ENCODE measurements at regions of chr14 and their contacts with region 1.

Region 1: DNA sequence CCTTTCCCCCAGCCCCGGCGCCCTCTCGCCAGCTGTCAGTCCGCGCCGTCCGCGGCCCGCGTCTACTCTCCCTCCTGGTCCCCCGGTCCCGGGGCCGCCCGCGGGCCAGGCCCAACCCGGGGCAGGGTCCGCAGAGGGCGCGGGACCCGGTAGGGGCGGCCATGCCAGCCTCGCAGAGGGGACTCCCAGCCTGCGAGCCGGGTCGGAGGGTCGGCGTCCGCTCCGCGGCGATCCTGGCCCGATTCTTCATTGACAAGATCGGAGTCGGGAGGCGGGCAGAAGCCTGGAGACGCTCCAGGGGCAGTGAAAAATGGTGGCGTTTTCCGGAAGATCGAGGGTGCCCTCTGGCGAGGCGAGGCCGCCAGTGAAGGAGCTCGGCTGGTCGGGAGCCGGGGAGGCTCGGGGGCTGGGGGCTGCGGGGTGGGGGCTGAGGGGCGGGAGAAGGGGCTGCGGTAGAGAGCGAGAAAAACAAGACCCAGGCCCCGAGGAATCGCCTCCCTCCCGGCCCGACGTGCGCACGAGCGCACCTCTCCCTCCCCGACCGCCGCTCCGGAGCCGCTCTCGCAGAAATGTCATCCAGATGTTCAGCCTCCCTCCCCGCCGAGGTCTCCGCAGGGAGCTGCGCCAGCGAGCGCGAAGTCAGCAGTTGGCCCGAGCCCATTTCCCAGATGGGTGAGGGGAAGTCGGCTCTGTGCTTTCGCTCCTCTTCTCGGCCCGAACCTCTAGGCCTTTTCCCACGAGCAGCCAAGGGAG is 647 bp upstream of the TGFB3 start:
- DNase-seq: peak; percentile 73 to 87
- ATAC-seq: peak; percentile 73

Region 2: GRCh38 chr14:75709207-75709812 is 273.1 kb before region 1 on chr14:
- intact Hi-C with region 1: loop called in 1 of 2 experiments (anchors 5 kb)
- DNase-seq: peak; percentile 58 to 82
- ATAC-seq: peak; percentile 88

Region 3: DNA sequence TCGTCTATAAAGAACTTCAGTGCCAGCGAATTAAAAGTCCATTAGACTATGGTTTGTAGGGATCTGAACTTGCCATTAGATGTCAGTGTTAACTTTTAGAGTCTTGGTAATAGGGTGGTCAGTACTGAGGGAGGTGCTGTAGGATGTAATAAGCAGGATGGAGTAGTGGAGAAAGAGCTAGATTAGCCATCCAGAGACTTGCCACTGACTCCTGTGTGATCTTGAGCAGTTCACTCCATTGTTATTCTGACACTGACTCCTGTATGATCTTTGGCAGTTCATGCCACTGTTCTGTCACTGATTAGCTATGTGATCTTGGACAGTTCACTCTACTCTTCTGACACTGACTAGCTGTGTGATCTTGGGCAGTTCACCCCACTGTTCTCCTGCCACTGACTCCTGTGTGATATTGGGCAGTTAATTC is 187.8 kb before region 1 on chr14:
- intact Hi-C with region 1: loop called in 1 of 2 experiments (anchors 5 kb)
- DNase-seq: no peak
- ATAC-seq: peak; percentile 70

Region 4: GRCh38 chr14:75906676-75907280 is 75.7 kb before region 1 on chr14:
- intact Hi-C with region 1: loop called in 1 of 2 experiments (anchors 5 kb)
- DNase-seq: peak; percentile 50 to 74
- ATAC-seq: peak; percentile 49

Region 5: DNA sequence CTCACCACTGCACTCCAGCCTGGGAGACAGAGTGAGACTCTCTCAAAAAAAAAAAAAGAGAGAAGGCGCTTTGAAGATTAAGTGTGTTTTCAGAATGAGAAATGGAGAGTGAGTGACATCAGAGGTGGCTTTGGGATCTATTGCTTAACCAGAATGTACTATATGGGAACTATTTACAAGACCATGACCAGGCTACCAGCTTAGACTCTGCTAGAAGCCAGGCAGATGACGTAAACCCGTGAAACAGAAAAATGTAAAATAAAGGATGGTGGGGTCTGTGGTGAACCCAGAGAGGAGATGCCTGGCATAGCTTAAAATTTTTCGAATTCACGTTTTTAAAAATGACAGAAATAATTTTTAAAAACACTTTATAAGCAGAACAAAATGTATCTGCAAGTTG is 85.1 kb after region 1 on chr14:
- intact Hi-C with region 1: no loop called
- DNase-seq: no peak
- ATAC-seq: no peak

Region 6: DNA sequence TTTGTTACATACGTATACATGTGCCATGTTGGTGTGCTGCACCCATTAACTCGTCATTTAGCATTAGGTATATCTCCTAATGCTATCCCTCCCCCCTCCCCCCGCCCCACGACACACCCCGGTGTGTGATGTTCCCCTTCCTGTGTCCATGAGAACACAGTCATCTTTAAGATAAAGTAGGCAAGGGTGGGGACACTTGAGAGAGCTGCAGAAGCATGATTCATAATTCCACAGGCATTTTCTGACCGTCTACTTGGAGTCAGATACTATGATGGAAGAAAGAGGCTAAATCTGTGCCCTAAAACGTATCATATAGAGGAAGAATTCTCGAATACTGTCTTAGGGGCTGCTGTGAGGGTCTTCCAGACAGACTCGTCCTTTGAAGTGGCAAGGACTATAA is 632.9 kb after region 1 on chr14:
- intact Hi-C with region 1: no loop called
- DNase-seq: no peak
- ATAC-seq: no peak

Region 7: GRCh38 chr14:76855066-76855465 is 872.6 kb after region 1 on chr14:
- intact Hi-C with region 1: no loop called
- DNase-seq: no peak
- ATAC-seq: no peak

Measured in left colon (tissue), 2 donors.